ENCODE measurements at regions of chr17 and their contacts with region 1.

Region 1: DNA sequence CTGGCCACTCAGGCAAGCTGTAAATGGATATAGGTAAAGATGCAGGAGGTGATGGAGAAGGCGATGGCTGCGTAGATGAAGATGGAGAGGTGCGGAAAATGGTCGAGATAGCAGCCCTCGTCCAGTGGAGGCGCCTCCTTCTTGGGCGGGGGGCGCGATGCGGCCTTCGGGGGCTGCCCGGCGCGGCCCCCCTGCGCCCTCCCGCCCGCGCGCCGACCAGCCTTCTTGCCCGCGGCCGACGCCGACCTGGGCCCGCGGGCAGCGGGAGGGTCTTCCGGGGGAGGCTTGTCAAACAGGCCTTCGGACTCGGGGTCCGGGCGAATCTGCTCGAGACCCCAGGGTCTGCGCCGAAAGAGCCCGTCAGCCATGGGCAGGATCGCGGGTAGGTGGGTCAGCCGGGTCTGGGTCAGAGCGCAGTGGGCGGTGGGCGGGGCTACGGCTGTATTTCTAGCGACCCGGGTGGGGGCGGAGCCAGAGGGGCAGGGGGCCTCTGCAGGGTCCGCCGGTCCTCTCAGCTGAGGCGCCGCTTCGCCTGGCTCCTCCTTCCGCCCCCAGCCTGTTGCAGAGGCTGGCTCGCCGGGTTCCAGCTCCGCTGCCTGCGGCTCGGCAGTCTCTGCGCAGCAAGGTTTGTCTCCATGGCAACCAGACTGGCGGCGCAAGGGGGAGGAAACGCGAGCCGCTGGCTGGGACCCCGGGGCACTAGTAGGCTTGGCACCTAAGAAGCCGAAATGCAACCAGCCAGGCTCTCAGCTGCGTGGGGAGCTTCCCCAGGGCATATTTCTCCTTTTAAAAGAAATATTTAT is 14.4 kb downstream of the MIS12 start:
- DNase-seq: peak; percentile 63
- H3K4me3 Mint-ChIP-seq: peak overlapping the region; percentile 94
- H3K27ac Mint-ChIP-seq: peak overlapping the region; percentile 59
- H3K4me1 Mint-ChIP-seq: peaks cover 11% of the 10 kb centered on the region
- H3K27me3 Mint-ChIP-seq: peaks cover 3% of the 10 kb centered on the region

Region 2: DNA sequence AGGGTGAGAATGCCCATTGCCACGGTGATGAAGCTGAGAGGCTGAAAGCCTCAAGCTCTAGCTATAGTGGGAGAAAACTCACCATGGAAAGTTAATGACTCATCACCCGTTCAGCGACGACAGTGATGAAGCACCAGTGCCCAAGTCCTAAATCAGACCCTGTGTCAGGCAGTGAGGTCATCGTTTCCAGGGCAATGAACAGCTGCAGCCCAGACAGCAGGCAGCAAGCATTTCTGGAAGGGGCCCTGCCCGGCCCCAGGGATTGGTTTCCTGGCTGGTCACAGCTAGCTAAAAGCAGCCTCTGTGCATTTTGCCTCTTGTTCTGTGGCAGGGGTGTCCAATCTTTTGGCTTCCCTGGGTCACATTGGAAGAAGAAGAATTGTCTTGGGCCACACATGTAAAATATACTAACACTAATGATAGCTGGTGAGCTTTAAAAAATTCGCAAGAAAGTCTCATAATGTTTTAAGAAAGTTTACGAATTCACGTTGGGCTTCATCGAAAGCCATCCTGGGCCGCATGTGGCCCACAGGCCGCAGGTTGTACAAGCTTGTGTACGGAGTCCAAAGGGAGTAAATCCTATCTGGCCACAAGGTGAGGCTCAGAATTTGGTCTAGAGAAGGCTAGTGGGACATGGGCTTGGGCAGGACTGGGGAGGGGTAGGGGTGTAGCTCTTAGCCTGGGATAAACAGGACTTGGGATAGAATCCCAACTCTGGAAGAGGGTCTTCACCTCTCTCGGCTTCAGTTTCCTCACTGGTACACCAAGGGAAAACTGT is 26.2 kb after region 1 on chr17:
- intact Hi-C with region 1: loop called (anchors 1 kb)
- DNase-seq: peak; percentile 18
- H3K4me3 Mint-ChIP-seq: no peak overlapping the region
- H3K27ac Mint-ChIP-seq: peak overlapping the region; percentile 84
- H3K4me1 Mint-ChIP-seq: peaks cover 13% of the 10 kb centered on the region
- H3K27me3 Mint-ChIP-seq: no peaks in the 10 kb centered on the region